ENCODE measurements at regions of chr4 and their contacts with region 1.

Region 1: DNA sequence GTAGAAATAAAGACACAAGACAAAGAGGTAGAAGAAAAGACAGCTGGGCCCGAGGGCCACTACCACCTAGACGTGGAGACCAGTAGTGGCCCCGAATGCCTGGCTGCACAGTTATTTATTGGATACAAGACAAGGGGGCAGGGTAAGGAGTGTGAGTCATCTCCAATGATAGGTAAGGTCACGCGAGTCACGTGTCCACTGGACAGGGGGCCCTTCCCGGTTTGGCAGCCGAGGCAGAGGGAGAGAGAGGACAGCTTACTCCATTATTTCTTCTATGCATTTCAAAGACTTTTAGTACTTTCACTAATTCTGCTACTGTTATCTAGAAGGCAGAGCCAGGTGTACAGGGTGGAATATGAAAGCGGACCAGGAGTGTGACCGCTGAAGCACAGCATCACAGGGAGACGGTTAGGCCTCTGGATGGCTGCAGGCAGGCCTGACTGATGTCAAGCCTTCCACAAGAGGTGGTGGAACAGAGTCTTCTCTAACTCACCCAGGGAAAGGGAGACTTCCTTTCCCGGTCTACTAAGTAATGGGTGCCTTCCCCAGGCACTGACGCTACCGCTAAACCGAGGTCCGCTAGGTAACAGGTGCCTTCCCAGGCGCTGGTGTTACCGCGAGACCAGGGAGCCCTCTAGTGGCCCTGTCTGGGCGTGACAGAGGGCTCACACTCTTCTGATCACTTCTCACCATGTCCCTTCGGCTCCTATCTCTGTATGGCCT is 44.9 kb downstream of the ZBTB49 start:
- DNase-seq: peak; percentile 58 to 65
- H3K4me3 ChIP-seq: no peak overlapping the region
- H3K27ac ChIP-seq: no peak overlapping the region
- H3K4me1 ChIP-seq: no peaks in the 10 kb centered on the region
- H3K27me3 ChIP-seq: no peaks in the 10 kb centered on the region
- CTCF ChIP-seq: peak; percentile 19 to 67 (median 52)
- POLR2A ChIP-seq: no peak

Region 2: GRCh38 chr4:4200624-4201023 is 134.3 kb before region 1 on chr4:
- intact Hi-C with region 1: no loop called
- DNase-seq: no peak
- H3K4me3 ChIP-seq: no peak overlapping the region
- H3K27ac ChIP-seq: no peak overlapping the region
- H3K4me1 ChIP-seq: no peaks in the 10 kb centered on the region
- H3K27me3 ChIP-seq: no peaks in the 10 kb centered on the region
- CTCF ChIP-seq: no peak
- POLR2A ChIP-seq: no peak

Region 3: DNA sequence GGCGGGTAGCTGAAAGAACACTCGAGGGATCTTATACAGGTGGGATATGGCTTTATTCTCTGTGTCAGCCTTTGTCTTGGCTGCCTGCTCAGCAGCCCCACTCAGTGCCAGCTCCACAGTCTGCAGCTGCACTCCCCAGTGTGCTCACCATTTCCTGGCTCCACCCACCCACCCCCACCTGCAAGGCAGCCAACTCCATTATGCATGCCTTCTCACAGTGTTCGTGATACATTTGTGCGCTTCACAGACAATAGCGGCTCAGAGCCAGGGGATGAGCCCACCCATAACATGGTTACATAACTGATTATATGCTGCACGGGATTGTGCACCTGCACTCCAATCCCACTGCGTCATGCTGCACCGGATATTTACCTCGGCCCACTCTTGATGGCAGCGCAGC is 78.2 kb before region 1 on chr4:
- intact Hi-C with region 1: loop called (anchors 10 kb)
- DNase-seq: no peak
- H3K4me3 ChIP-seq: no peak overlapping the region
- H3K27ac ChIP-seq: no peak overlapping the region
- H3K4me1 ChIP-seq: no peaks in the 10 kb centered on the region
- H3K27me3 ChIP-seq: no peaks in the 10 kb centered on the region
- CTCF ChIP-seq: no peak
- POLR2A ChIP-seq: no peak

Region 4: GRCh38 chr4:4281787-4282186 is 53.2 kb before region 1 on chr4:
- intact Hi-C with region 1: no loop called
- DNase-seq: no peak
- H3K4me3 ChIP-seq: no peak overlapping the region
- H3K27ac ChIP-seq: no peak overlapping the region
- H3K4me1 ChIP-seq: no peaks in the 10 kb centered on the region
- H3K27me3 ChIP-seq: no peaks in the 10 kb centered on the region
- CTCF ChIP-seq: no peak
- POLR2A ChIP-seq: no peak

Measured in thyroid gland (tissue), 4 donors.